ENCODE measurements at regions of chr11 and their contacts with region 1.

Region 1: DNA sequence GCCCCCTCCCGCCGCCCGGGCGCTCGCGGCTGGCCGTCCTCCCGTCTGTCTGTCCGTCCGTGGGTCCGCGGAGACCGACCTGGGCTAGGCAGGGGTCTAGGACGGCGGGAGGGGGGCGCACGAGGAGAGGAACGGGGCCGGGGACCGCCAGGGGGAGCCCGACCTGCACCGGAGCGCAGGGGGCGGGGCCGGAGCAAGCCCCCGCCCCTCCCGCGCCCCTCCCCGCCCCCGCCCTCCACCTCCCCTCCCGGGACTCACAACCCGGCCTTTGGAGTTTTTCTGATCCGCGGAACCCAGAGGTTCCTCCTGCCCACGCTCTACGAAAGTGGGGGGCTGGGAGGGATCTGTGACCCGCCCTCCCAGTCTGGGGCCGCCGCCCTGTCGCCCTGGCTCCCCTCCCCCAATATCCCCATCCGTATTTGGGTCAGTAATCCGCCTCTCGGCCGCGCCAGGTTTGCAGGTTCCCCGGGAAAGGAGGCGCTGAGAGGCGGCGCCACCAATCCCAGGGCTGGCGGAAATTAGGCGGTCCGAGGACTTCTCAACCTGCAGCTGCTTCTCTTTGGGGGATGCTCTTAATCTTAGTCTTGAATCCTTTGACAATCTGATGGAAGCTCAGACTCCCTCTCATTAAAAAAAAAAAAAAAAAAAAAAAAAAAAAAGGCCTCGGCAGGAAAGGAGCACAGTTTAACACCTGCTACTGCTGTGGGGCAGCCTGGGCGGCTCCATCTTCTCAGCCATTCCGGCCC is 925 bp upstream of the KCNJ11 start:
- DNase-seq: peak; percentile 70 to 90 (median 89)
- ATAC-seq: peak; percentile 70 to 77
- H3K4me3 ChIP-seq: peak overlapping the region; percentile 78
- H3K27ac ChIP-seq: peak overlapping the region; percentile 55
- H3K4me1 ChIP-seq: no peaks in the 10 kb centered on the region
- H3K27me3 ChIP-seq: no peaks in the 10 kb centered on the region

Region 2: DNA sequence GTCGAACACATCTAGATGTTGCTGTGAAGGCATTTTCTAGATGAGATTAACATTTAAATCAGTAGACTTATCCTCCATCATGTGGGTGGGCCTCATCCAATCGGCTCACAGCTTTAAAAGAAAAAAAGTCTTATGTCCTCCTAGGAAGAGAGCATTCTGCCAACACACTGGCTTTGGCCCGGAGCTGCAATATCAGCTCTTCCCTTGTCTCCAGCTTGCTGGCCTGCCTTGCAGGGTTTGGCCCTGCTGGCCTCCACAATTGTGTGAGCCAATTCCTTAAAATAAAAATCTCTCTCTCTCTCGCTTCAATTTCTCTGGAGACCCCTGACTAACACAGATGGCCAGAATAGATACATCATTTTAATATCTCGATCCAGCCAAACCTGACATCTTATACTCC is 100.4 kb after region 1 on chr11:
- intact Hi-C with region 1: loop called in 1 of 4 experiments (anchors 5 kb)
- DNase-seq: no peak
- ATAC-seq: no peak
- H3K4me3 ChIP-seq: no peak overlapping the region
- H3K27ac ChIP-seq: no peak overlapping the region
- H3K4me1 ChIP-seq: no peaks in the 10 kb centered on the region
- H3K27me3 ChIP-seq: no peaks in the 10 kb centered on the region